ENCODE measurements at regions of chr20 and their contacts with region 1.

Region 1: GRCh38 chr20:63864847-63865640 is at the start of gene TPD52L2:
- DNase-seq: peak; percentile 99
- H3K4me3 ChIP-seq: peak within 1 kb of the TSS; percentile 77
- H3K27ac ChIP-seq: peak within 1 kb of the TSS; percentile 88
- H3K4me1 ChIP-seq: peaks cover 28% of the 10 kb centered on the region
- H3K27me3 ChIP-seq: no peaks in the 10 kb centered on the region
- CTCF ChIP-seq: no peak
- total RNA-seq, gene TPD52L2: 149 and 158 TPM in 2 replicates

Region 2: GRCh38 chr20:63483836-63484235 is 381.2 kb before region 1 on chr20:
- CTCF ChIA-PET with region 1: no interaction called
- POLR2A ChIA-PET with region 1: no interaction called
- intact Hi-C with region 1: no loop called
- DNase-seq: no peak
- H3K4me3 ChIP-seq: no peak overlapping the region
- H3K27ac ChIP-seq: no peak overlapping the region
- H3K4me1 ChIP-seq: 0 out of 2 replicates have a peak, but pooled peaks cover 6% of the 10 kb centered on the region
- H3K27me3 ChIP-seq: peaks cover 31% of the 10 kb centered on the region; the same call in 1 of the 2 replicates
- CTCF ChIP-seq: 0 out of 2 replicates have a peak, but pooled peaks have one; percentile 33

Region 3: DNA sequence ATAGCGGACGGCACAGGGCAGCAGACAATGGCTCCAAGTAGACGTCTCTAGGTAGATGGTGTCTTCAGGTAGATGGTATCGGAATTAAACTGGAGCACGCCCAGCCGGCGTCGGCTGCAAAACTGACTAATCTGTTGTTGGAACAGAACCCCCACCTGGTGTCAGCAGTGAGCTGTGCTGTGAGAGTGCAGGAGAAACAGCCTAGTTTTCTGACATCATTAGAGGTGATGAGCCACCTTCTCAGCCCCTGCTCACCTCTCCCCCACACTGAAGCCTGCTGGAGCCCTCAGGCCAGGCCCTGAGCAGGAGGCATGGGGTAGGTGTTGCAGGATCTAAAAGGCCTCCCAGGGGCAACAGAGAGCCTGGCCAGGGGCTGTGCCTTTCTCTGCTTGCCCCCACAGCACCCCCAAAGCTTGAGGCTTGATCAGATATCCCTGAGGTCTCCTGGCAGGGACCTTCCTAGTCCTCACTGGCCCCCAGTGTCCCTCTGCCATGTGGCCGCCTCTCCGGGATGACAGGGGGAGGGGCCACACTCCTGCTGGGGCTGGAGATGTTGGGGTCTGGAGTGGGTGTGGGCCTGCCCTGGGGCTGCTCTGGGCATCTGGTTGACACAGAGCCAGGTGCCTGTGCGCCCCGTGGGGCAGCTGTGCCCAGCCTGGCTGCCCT is 284.1 kb before region 1 on chr20:
- CTCF ChIA-PET with region 1: no interaction called
- POLR2A ChIA-PET with region 1: no interaction called
- intact Hi-C with region 1: loop called (anchors 1 kb)
- DNase-seq: peak; percentile 71 to 75
- H3K4me3 ChIP-seq: no peak overlapping the region
- H3K27ac ChIP-seq: no peak overlapping the region
- H3K4me1 ChIP-seq: peaks cover 7% of the 10 kb centered on the region
- H3K27me3 ChIP-seq: no peaks in the 10 kb centered on the region
- CTCF ChIP-seq: peak; percentile 73

Region 4: GRCh38 chr20:63641792-63642544 is 223.1 kb before region 1 on chr20:
- CTCF ChIA-PET with region 1: interaction called, 3 read pairs
- POLR2A ChIA-PET with region 1: interaction called, 19 read pairs
- intact Hi-C with region 1: no loop called
- DNase-seq: peak; percentile 90 to 97
- H3K4me3 ChIP-seq: peak overlapping the region; percentile 92
- H3K27ac ChIP-seq: peak overlapping the region; percentile 21
- H3K4me1 ChIP-seq: peaks cover 16% of the 10 kb centered on the region
- H3K27me3 ChIP-seq: no peaks in the 10 kb centered on the region
- CTCF ChIP-seq: peak; percentile 65

Region 5: GRCh38 chr20:63739130-63740069 is 125.6 kb before region 1 on chr20 and contains the start of gene SLC2A4RG:
- CTCF ChIA-PET with region 1: interaction called, 3 read pairs
- POLR2A ChIA-PET with region 1: no interaction called
- intact Hi-C with region 1: loop called (anchors 1 kb)
- DNase-seq: peak in 1 of 2 experiments; percentile 85
- H3K4me3 ChIP-seq: peak within 1 kb of the TSS; percentile 46
- H3K27ac ChIP-seq: 0 out of 2 replicates have a peak within 1 kb of the TSS, but pooled peaks have one; percentile 13
- H3K4me1 ChIP-seq: peaks cover 9% of the 10 kb centered on the region
- H3K27me3 ChIP-seq: no peaks in the 10 kb centered on the region
- CTCF ChIP-seq: no peak
- total RNA-seq, gene SLC2A4RG: 167 and 233 TPM in 2 replicates

Region 6: DNA sequence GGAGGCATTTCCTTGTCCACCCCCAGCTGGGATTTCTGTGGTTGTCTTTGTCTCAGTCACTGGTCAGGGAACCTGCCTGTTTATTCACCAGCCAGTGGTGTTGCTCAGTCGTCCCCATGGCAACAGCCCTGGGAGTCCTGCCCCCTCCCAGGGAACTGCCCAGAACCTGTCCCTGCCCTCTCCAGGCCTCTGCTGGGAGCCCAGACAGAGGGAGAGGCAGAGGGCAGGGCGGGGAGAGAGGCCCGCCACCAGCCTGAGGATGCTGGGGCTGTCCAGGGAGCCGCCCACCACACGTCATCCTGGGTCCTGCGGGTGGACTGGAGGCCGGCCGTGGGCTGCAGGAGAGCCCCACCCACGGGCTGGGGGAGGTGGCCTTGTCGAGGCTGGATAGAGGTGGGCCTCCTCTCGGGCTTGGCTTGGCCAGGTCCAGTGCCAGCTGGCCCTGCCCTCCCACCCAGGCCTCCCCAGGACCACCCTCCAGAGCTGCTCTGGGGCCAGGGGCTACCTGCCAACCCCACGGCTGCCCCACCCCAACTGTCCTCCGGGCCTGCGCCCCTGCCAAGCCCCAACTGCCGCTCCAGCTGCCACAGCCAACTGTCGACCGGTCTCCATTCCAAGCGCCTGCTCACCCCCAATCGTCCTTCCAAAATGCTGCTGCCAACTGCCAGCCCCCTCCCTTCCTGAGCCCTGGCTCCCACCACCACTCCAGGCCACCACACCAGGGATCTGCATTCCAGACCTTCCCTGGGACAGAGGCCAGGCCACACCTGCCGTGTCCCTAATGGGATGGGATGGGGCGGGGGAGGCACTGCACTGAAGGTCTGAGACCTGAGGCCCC is 29.8 kb before region 1 on chr20:
- CTCF ChIA-PET with region 1: no interaction called
- POLR2A ChIA-PET with region 1: no interaction called
- intact Hi-C with region 1: loop called (anchors 1 kb)
- DNase-seq: peak; percentile 95 to 97
- H3K4me3 ChIP-seq: no peak overlapping the region
- H3K27ac ChIP-seq: no peak overlapping the region
- H3K4me1 ChIP-seq: peaks cover 8% of the 10 kb centered on the region
- H3K27me3 ChIP-seq: no peaks in the 10 kb centered on the region
- CTCF ChIP-seq: no peak

Region 7: GRCh38 chr20:64062596-64063388 is 197.7 kb after region 1 on chr20 and contains the start of gene TCEA2:
- CTCF ChIA-PET with region 1: no interaction called
- POLR2A ChIA-PET with region 1: no interaction called
- intact Hi-C with region 1: loop called (anchors 10 kb)
- DNase-seq: peak; percentile 87 to 97
- H3K4me3 ChIP-seq: peak within 1 kb of the TSS; percentile 90
- H3K27ac ChIP-seq: peak within 1 kb of the TSS; percentile 61
- H3K4me1 ChIP-seq: peaks cover 54% of the 10 kb centered on the region
- H3K27me3 ChIP-seq: no peaks in the 10 kb centered on the region
- CTCF ChIP-seq: no peak
- total RNA-seq, gene TCEA2: 100 and 156 TPM in 2 replicates